HAP-1 (cell line): ENCODE measurements at regions of chrX and their contacts with region 1.

Region 1: DNA sequence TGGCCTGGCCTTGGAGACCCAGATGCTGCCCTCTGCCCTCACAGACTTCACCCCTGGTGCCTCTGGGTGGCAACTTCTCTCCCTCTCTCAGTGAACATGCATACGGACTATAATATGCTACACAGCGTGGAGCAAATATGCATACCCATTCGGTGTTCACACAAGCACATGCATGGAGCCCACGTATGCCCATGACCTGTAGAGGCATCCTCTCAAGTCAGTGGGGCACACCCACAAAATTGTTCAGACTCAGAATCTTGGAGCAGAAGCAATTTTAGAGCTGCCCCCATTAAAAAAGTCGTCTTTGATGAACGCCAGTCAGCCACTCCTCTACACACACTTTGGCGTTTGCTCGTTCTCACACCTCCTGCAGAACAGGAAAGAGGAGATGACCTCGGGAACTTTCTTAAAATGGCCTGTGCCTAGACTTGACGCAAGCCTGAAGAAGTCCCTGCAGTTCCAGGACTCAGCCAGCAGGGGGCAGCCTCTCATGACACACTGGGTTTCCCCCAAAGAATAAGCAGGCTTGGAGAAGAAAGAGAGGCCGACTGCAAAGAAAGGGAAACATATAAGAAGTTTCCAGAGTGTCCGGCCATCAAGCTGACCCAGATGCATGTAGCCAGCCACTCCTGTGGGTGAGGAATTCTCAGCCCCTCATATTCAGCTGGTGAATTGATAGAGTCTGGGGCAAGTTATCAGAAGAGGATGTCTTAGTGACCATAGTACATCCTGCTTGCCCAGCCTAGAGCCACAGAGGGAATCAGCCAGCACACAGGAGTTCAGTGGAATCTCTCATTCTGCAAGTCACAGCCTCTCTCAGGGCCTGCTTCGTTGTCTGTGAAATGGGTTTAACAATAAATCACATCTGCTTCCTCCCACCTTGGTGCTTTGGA is 17.3 kb downstream of the APLN start:
- DNase-seq: peak; percentile 48 to 87
- H3K4me3 ChIP-seq: no peak overlapping the region
- H3K4me1 ChIP-seq: no peaks in the 10 kb centered on the region
- H3K27me3 ChIP-seq: no peaks in the 10 kb centered on the region

Region 2: DNA sequence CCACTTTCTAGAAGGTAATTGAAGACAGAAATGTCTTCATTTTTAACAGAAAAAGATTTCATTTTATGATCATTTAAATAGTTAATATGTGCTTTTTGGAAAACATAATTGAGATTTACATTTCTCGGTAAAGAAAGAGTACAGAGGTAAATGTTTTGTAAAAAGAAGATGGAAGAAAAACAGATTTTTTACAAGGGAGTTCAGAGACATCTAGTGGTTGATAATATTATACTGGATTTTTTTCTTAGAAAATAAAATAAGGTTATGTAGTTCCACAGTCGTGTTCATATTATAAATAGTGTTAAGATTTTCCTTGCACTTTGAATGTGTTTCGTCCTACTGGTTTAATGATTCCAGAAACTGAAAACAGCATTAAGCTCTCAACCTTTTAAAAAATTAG is 174.8 kb before region 1 on chrX:
- in situ Hi-C with region 1: no loop called
- DNase-seq: no peak
- H3K4me3 ChIP-seq: no peak overlapping the region
- H3K4me1 ChIP-seq: no peaks in the 10 kb centered on the region
- H3K27me3 ChIP-seq: no peaks in the 10 kb centered on the region

Region 3: DNA sequence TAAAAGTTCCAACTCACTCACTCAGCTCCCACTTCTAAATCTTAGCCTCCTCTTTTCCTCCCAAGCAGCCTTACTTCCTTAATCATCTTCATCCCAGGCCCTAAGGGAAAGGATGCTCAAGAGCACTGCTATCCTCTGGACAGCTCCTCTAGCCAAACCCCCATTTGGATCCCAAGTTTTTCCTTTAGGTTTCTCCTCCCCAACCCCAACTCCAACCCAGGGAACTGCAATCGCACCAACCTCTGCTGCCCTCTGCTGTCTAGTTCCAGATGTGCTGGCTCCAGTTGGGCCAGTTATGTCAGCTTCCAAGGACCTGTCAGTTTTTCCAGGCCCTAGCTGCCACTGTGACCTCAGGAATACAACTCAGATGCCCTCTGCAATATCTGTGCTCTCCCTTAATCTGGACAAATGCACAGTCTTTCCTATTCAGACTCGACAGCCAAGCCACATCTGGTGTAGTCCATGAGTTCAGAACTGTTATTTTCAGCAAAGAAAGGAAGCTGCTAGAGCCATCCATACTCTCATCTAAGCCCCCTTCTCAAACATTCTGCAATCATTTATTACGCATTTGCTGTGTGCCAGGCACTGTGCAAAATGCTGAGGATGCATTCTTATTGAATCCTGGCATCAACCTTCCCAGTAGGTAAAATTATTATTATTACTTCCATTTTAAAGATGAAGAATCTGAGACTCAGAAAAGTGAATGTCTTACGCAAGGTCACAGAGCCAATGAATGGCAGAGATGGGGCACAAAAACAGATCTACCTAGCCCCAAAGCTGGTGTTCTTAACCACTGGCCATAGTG is 89.0 kb after region 1 on chrX:
- in situ Hi-C with region 1: loop called (anchors 10 kb)
- DNase-seq: peak; percentile 32 to 80
- H3K4me3 ChIP-seq: no peak overlapping the region
- H3K4me1 ChIP-seq: no peaks in the 10 kb centered on the region
- H3K27me3 ChIP-seq: no peaks in the 10 kb centered on the region; the same call in none of the 2 replicates

Region 4: DNA sequence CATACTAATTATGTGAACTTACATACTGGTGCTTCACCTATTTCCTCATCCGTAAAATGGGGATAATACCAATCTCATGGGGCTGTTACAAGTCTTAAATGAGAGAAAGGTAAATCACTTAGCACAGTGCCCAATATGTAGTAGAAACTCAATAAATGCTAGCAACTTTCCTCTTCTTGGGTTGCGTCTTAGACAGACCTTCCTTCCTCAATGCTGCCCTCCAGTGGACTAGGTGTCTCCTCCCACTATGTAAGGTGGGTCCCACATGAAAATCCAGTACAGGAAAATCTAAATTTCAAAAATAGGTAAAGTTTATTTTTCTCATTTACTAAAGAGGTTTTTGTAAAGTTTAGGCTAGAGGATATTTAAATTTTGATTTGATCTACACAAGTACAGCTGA is 185.7 kb after region 1 on chrX:
- in situ Hi-C with region 1: loop called (anchors 10 kb)
- DNase-seq: peak; percentile 26 to 70
- H3K4me3 ChIP-seq: no peak overlapping the region
- H3K4me1 ChIP-seq: no peaks in the 10 kb centered on the region
- H3K27me3 ChIP-seq: no peaks in the 10 kb centered on the region